ENCODE measurements at regions of chr6 and their contacts with region 1.

Region 1: DNA sequence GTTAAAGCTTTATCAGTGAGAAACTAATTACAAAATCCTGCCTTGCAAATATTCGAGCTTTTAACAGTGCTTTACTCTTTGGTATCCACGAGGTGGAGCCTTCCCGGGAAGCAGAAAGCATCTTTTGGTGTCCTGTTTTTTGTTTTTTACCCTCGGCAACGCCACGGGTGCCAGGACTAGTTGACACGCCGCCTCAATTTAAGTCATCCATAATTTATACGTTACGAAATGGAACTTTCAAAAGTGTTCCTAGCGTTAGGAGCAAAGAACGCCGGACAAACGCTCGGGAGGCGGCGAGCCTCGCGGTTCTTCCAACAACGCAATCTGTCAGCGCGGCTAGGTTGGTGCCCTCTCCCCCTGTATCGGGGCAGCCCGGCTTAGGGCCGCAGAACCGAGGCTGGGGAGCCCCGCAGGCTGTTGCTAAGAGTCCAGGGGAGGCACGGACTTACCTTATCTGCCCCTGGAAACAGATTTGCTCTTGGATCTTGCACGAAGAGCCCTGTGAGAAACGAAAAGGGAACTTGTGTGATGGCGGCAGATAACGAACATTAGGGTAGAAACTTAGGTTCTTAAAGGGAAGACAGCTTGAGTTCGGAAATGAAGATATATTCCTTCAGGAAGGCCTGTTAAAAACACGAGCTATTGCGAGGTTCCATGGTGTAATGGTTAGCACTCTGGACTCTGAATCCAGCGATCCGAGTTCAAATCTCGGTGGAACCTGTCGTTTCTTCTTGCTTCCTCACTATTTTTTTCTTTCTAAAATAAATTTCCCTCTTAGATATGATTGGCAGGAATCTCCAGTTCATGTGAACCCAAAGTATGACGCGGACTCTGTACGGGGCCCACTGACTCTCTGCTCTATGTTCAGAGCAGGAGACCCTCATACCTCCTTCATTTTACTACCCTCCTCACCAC is 46.2 kb upstream of the ZNF184 start:
- DNase-seq: no peak
- H3K4me3 ChIP-seq: peak overlapping the region; percentile 62 to 84 (median 73)
- H3K27ac ChIP-seq: peak overlapping the region; percentile 81 to 93 (median 90)
- H3K4me1 ChIP-seq: peaks cover 7 to 15% (median 9%) of the 10 kb centered on the region in 4 donors
- H3K27me3 ChIP-seq: peaks cover 0 to 10% (median 0%) of the 10 kb centered on the region in 4 donors
- CTCF ChIP-seq: peak; percentile 62 to 76 (median 71)
- EP300 ChIP-seq: no peak
- POLR2A ChIP-seq: no peak

Region 2: DNA sequence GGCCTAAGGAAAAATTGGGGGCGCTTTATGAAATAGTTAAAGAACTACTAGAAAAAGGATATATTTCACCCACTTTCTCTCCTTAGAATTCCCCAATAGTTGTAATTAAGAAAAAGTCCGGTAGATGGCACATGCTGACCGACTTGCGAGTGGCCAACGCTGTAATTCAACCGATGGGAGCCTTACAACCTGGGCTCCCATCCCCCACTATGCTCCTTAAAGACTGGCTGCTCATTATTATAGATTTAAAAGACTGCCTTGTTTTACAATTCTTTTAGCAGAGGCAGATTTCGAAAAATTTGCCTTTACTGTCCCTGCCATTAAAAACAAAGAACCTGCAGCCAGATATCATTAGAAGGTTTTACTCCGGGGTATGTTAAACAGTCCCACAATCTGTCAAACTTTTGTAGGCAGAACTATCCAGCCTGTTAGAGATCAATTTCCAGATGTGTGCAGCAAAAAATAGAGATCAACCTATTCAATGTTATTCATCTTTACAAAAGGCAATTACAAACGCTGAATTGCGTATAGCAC is 330.2 kb before region 1 on chr6:
- intact Hi-C with region 1: loop called (anchors 10 kb)
- DNase-seq: no peak
- H3K4me3 ChIP-seq: peak overlapping the region; percentile 57 to 70 (median 66)
- H3K27ac ChIP-seq: peak overlapping the region; percentile 76 to 82 (median 80)
- H3K4me1 ChIP-seq: peaks cover 0 to 9% (median 6%) of the 10 kb centered on the region in 4 donors
- H3K27me3 ChIP-seq: peaks cover 0 to 15% (median 0%) of the 10 kb centered on the region in 4 donors
- CTCF ChIP-seq: peak; percentile 77 to 79 (median 78)
- EP300 ChIP-seq: no peak
- POLR2A ChIP-seq: no peak

Region 3: GRCh38 chr6:27479319-27480182 is 39.6 kb before region 1 on chr6:
- intact Hi-C with region 1: loop called (anchors 5 kb)
- DNase-seq: peak; percentile 97
- H3K4me3 ChIP-seq: peak overlapping the region; percentile 76 to 90 (median 81)
- H3K27ac ChIP-seq: peak overlapping the region; percentile 92 to 98 (median 98)
- H3K4me1 ChIP-seq: peaks cover 13 to 20% (median 17%) of the 10 kb centered on the region in 4 donors
- H3K27me3 ChIP-seq: no peaks in the 10 kb centered on the region
- CTCF ChIP-seq: no peak
- EP300 ChIP-seq: no peak
- POLR2A ChIP-seq: no peak

Region 4: DNA sequence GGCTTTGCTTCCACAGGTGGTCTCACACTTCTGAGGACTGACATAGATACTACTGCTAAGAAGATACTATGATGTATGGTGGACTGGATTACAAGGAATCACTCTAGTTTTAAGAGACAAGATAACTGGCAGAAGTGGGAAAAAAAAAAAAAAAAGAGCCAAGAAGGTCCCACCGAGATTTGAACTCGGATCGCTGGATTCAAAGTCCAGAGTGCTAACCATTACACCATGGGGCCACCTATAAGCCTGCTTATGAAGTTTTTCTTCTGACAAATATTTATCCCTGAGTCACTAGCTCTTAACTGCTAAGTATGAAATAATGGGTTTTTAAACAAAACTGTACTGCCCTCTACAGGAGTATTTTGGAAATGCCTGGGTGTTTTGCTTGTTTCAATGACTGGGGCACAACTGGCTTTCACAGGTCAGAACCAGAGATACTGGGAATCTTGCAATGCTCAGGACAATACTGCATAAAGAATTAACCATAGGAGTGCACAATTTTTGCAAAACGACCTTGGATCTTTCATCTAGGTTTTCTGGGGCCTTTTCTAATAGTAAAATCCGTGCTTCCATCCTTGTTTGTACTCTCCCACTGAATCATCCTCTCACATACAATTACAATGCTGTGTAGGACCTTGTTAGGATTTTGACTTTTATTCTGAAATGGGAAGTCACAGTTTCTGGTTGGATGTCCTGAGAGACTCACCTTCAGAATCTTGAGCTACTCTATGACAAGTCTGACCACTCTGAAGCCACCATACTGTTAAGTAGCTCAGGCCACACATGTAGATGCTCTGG is 276.8 kb after region 1 on chr6:
- intact Hi-C with region 1: loop called (anchors 5 kb)
- DNase-seq: no peak
- H3K4me3 ChIP-seq: no peak overlapping the region
- H3K27ac ChIP-seq: no peak overlapping the region
- H3K4me1 ChIP-seq: peaks cover 4 to 23% (median 18%) of the 10 kb centered on the region in 4 donors
- H3K27me3 ChIP-seq: peaks cover 0 to 30% (median 0%) of the 10 kb centered on the region in 4 donors
- CTCF ChIP-seq: peak; percentile 73 to 90 (median 80)
- EP300 ChIP-seq: no peak
- POLR2A ChIP-seq: no peak